PC-3 (cell line): ENCODE measurements at regions of chr3 and their contacts with region 1.

Region 1: GRCh38 chr3:192467230-192468140 is 259.9 kb downstream of the FGF12 start:
- DNase-seq: peak; percentile 82
- ATAC-seq: peak; percentile 92
- H3K4me3 ChIP-seq: no peak overlapping the region
- H3K27ac ChIP-seq: no peak overlapping the region
- H3K4me1 ChIP-seq: no peaks in the 10 kb centered on the region
- H3K27me3 ChIP-seq: peaks cover 83% of the 10 kb centered on the region
- CTCF ChIP-seq: peak; percentile 95

Region 2: DNA sequence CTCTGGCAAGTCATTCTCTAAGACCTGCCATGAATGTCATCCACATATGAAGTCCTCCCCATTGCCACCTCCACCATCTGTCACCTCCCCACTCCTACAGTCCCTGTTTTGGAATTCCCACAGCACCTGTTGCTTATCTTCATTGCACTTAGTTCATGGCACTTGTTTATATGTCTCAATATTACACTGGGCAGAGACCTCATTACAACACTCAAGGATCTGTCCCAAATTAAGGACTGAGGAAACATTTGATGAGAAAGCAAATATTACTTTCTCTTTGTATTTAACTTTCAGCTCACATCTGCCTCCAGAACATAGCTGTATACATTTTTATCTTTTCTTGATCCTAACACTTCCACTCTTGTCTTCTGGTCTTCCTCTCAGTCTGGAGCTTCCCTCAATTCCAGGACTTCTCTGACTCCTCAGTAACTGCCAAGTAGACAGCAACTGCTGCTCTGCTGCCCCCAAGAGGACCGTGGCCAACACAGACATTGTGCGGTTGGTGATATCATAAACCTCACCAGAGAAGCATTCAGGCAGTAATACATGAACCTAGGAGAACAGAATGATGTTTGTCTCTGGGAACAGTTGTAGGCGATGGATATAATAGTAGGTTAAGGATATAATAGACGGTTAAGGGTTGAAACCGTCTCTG is 304.9 kb after region 1 on chr3:
- CTCF ChIA-PET with region 1: no interaction called
- POLR2A ChIA-PET with region 1: no interaction called
- intact Hi-C with region 1: loop called (anchors 10 kb)
- DNase-seq: peak; percentile 70
- ATAC-seq: peak; percentile 100
- H3K4me3 ChIP-seq: no peak overlapping the region
- H3K27ac ChIP-seq: no peak overlapping the region
- H3K4me1 ChIP-seq: no peaks in the 10 kb centered on the region
- H3K27me3 ChIP-seq: peaks cover 18% of the 10 kb centered on the region
- CTCF ChIP-seq: peak; percentile 88

Region 3: DNA sequence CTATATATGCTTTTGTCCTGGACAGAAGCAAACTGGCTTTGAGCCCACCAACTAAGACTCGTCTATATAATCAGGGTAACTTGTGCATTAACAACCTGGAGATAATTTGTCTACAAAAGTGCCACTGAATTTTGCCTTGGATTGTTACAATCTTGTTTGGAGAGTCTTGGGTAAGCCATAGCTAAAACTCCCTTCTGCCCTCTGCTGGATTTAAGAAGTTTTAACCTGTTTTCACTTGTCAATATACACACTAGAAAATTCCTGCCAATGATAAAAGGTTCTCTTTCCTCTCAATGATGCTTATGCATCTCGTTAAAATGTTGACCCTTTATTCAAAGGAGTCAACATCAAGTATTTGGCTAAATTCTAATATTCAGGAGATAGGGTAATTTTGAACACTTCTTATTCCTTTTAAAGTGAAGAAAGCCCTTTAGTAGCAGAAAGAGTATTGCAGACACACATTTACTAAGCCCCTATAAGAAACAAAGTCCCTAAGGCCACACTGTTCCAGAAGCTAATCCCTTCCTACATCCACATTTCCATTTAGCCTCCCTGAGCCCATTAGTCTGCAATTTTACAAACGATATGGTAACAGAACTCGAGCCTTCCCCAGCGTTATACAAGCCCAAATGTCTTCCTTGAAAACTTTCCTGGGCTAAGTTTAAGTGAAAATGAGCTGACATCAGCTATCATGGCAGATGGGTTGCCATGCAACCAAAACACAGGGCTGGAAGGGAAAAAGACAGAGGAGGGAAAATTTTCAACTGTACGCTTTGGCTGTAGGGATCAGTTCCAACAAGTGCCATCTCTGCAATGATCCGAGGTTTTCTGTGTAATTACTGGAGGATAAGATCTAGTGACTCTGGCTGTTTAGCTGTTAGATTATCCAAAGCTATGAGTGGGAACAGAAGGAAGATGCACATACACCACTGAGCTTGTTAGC is 335.7 kb after region 1 on chr3:
- CTCF ChIA-PET with region 1: interaction called, 5 read pairs
- POLR2A ChIA-PET with region 1: no interaction called
- intact Hi-C with region 1: loop called (anchors 1 kb)
- DNase-seq: peak; percentile 66
- ATAC-seq: peak; percentile 68; the same call in 1 of the 2 replicates
- H3K4me3 ChIP-seq: no peak overlapping the region
- H3K27ac ChIP-seq: no peak overlapping the region
- H3K4me1 ChIP-seq: no peaks in the 10 kb centered on the region
- H3K27me3 ChIP-seq: no peaks in the 10 kb centered on the region
- CTCF ChIP-seq: peak; percentile 75

Region 4: GRCh38 chr3:193052354-193053045 is 585.0 kb after region 1 on chr3:
- CTCF ChIA-PET with region 1: no interaction called
- POLR2A ChIA-PET with region 1: no interaction called
- intact Hi-C with region 1: loop called (anchors 5 kb)
- DNase-seq: no peak
- ATAC-seq: no peak
- H3K4me3 ChIP-seq: no peak overlapping the region
- H3K27ac ChIP-seq: no peak overlapping the region
- H3K4me1 ChIP-seq: no peaks in the 10 kb centered on the region
- H3K27me3 ChIP-seq: peaks cover 69% of the 10 kb centered on the region
- CTCF ChIP-seq: no peak

Region 5: GRCh38 chr3:193572426-193572908 is 1105.0 kb after region 1 on chr3:
- CTCF ChIA-PET with region 1: no interaction called
- POLR2A ChIA-PET with region 1: no interaction called
- intact Hi-C with region 1: loop called (anchors 10 kb)
- DNase-seq: peak; percentile 80
- ATAC-seq: peak; percentile 93
- H3K4me3 ChIP-seq: no peak overlapping the region
- H3K27ac ChIP-seq: no peak overlapping the region
- H3K4me1 ChIP-seq: peaks cover 6% of the 10 kb centered on the region
- H3K27me3 ChIP-seq: peaks cover 41% of the 10 kb centered on the region
- CTCF ChIP-seq: peak; percentile 96